PC-3 (cell line): ENCODE measurements at regions of chr6 and their contacts with region 1.

Region 1: GRCh38 chr6:96470296-96470695 is 51.3 kb upstream of the UFL1 start:
- DNase-seq: no peak
- ATAC-seq: no peak
- H3K4me3 ChIP-seq: no peak overlapping the region
- H3K27ac ChIP-seq: no peak overlapping the region
- H3K4me1 ChIP-seq: no peaks in the 10 kb centered on the region; the same call in 1 of the 2 replicates
- H3K27me3 ChIP-seq: no peaks in the 10 kb centered on the region
- CTCF ChIP-seq: no peak

Region 2: GRCh38 chr6:95431637-95432228 is 1038.6 kb before region 1 on chr6:
- CTCF ChIA-PET with region 1: no interaction called
- POLR2A ChIA-PET with region 1: no interaction called
- intact Hi-C with region 1: loop called (anchors 5 kb)
- DNase-seq: peak; percentile 48
- ATAC-seq: no peak; the same call in 1 of the 2 replicates
- H3K4me3 ChIP-seq: no peak overlapping the region
- H3K27ac ChIP-seq: no peak overlapping the region
- H3K4me1 ChIP-seq: no peaks in the 10 kb centered on the region
- H3K27me3 ChIP-seq: no peaks in the 10 kb centered on the region
- CTCF ChIP-seq: peak; percentile 69

Region 3: DNA sequence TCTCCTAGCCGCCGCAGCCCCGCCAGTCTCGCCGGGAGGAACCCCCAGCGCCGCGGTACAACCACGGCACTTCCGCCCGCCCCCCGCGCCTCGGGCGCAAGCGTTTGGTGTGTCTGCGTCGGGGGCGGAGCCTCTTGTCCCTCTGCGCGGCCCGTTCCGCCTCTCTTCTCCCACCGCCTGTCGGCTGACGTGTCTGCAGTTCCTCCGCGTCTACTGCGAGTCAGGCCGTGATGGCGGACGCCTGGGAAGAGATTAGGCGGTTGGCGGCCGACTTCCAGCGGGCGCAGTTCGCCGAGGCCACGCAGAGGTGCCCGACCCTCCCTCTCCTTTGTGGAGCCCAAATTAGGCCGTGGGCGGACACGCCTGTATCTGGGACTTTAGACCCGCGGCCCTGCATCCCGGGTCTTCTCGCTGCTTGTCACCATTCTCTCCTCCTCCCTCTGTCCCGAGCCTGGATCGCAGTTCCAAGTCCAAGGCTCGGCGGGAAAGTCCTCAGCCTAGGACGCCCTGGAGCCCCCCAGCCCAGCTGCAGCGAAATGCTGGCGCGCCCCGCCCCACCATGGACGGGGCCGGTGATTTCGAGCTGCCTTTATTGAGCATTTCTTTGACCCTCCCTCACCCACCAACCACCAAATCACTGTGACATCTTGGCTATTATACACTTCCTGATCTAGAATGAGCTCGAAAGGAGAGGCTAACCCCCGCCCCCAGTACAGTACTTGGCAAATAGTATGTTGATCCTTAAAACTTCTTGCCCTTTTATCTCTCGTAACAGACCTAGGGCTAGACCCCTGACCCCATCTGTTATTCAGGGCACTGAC is 51.6 kb after region 1 on chr6 and contains the start of gene UFL1:
- CTCF ChIA-PET with region 1: no interaction called
- POLR2A ChIA-PET with region 1: no interaction called
- intact Hi-C with region 1: no loop called
- DNase-seq: peak; percentile 88
- ATAC-seq: peak; percentile 93
- H3K4me3 ChIP-seq: peak within 1 kb of the TSS; percentile 75
- H3K27ac ChIP-seq: peak within 1 kb of the TSS; percentile 76
- H3K4me1 ChIP-seq: peaks cover 22% of the 10 kb centered on the region
- H3K27me3 ChIP-seq: no peaks in the 10 kb centered on the region
- CTCF ChIP-seq: no peak
- total RNA-seq, gene UFL1: 10.4 and 10.9 TPM in 2 replicates